PC-3 (cell line): ENCODE measurements at regions of chr9 and their contacts with region 1.

Region 1: DNA sequence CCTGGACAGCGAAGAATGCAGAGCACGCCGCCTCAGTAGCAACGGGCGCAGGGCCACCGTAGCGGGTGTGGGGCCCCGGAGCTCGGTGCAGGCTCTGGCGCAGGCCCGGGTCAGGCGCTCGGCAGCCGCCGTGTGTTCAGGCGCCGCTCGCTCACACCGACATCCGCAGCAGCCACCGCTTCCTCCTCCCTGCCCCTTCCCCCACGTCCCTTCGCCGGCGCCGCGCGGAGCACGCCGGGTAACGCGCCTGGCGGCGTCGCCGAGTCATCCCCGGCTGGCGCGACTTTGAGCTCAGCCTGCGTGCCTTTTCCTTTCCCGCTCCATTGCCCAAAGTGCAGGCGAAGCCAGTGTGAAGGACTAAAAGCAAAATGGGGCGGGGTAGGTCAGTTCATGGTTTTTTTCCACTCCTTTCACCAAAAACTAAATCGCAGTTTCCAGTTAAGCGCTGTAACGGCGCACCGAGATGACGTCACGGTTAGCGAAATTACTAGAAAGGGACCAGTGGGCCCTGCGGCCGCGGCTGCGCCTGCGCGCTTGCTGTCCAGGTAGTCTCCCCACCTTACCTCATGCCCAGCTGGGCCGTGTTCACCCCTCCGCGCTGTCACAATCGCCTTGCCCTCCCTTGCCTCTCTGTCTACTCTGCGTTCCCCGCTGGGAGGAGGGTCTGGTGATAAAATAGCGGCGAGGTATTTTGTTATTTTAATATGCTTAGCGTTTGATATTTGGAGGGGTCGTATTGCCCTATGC is at the start of gene UBQLN1:
- DNase-seq: peak; percentile 84
- ATAC-seq: peak; percentile 83
- H3K4me3 ChIP-seq: peak within 1 kb of the TSS; percentile 91
- H3K27ac ChIP-seq: peak within 1 kb of the TSS; percentile 99
- H3K4me1 ChIP-seq: peaks cover 22% of the 10 kb centered on the region
- H3K27me3 ChIP-seq: no peaks in the 10 kb centered on the region
- CTCF ChIP-seq: no peak
- total RNA-seq, gene UBQLN1: 105 and 111 TPM in 2 replicates

Region 2: GRCh38 chr9:83622939-83623678 is 84.8 kb before region 1 on chr9 and contains the start of gene IDNK:
- CTCF ChIA-PET with region 1: no interaction called
- POLR2A ChIA-PET with region 1: no interaction called
- intact Hi-C with region 1: loop called (anchors 5 kb)
- DNase-seq: peak; percentile 54
- ATAC-seq: peak; percentile 72
- H3K4me3 ChIP-seq: peak within 1 kb of the TSS; percentile 85
- H3K27ac ChIP-seq: peak within 1 kb of the TSS; percentile 34
- H3K4me1 ChIP-seq: peaks cover 9% of the 10 kb centered on the region; the same call in 1 of the 2 replicates
- H3K27me3 ChIP-seq: no peaks in the 10 kb centered on the region
- CTCF ChIP-seq: no peak
- total RNA-seq, gene IDNK: 1.4 and 2.8 TPM in 2 replicates

Region 3: GRCh38 chr9:83665580-83666200 is 42.3 kb before region 1 on chr9:
- CTCF ChIA-PET with region 1: no interaction called
- POLR2A ChIA-PET with region 1: no interaction called
- intact Hi-C with region 1: loop called (anchors 5 kb)
- DNase-seq: no peak
- ATAC-seq: peak; percentile 33; the same call in 1 of the 2 replicates
- H3K4me3 ChIP-seq: no peak overlapping the region
- H3K27ac ChIP-seq: no peak overlapping the region
- H3K4me1 ChIP-seq: no peaks in the 10 kb centered on the region
- H3K27me3 ChIP-seq: no peaks in the 10 kb centered on the region
- CTCF ChIP-seq: no peak

Region 4: GRCh38 chr9:83980395-83981125 is 272.6 kb after region 1 on chr9 and contains the start of gene RMI1:
- CTCF ChIA-PET with region 1: no interaction called
- POLR2A ChIA-PET with region 1: no interaction called
- intact Hi-C with region 1: loop called (anchors 10 kb)
- DNase-seq: peak; percentile 95
- ATAC-seq: peak; percentile 75
- H3K4me3 ChIP-seq: peak within 1 kb of the TSS; percentile 94
- H3K27ac ChIP-seq: peak within 1 kb of the TSS; percentile 94
- H3K4me1 ChIP-seq: peaks cover 21% of the 10 kb centered on the region
- H3K27me3 ChIP-seq: no peaks in the 10 kb centered on the region
- CTCF ChIP-seq: no peak; the same call in 1 of the 2 replicates
- total RNA-seq, gene RMI1: 5.0 and 6.2 TPM in 2 replicates